PC-9 (cell line): ENCODE measurements at regions of chr4 and their contacts with region 1.

Region 1: GRCh38 chr4:180148737-180149136 is 2094.5 kb upstream of the TENM3 start:
- DNase-seq: no peak
- H3K4me3 ChIP-seq: no peak overlapping the region
- H3K27ac ChIP-seq: no peak overlapping the region
- H3K4me1 ChIP-seq: no peaks in the 10 kb centered on the region
- H3K27me3 ChIP-seq: no peaks in the 10 kb centered on the region
- CTCF ChIP-seq: no peak

Region 2: DNA sequence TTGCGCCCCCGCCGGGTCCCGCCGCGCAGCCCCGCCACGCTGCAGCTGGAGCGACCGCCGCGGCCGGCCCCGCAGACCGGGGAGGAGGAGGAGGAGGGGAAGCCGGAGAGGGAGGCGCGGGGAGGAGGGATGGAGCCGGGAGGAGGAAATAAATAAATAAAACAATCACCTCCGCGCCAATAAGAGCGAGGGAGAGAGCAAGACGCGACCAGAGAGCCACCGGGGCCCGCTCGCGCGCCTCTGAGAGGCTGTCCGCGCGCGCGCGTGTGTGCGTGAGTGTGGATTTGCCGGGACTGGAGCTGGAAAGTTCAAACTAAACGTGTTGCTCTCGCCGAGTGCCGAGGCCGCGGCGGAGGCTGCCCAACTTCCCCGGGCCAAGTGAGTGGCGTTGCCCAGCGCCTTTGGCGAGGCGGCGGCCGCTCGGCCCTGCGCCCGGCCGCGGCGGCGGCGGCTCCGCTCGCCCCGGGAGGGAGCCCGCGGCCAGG is 90.0 kb before region 1 on chr4:
- CTCF ChIA-PET with region 1: no interaction called
- POLR2A ChIA-PET with region 1: no interaction called
- intact Hi-C with region 1: loop called (anchors 5 kb)
- DNase-seq: peak in 1 of 2 experiments; percentile 30
- H3K4me3 ChIP-seq: peak overlapping the region; percentile 52; the same call in 1 of the 2 replicates
- H3K27ac ChIP-seq: no peak overlapping the region
- H3K4me1 ChIP-seq: 0 out of 2 replicates have a peak, but pooled peaks cover 5% of the 10 kb centered on the region
- H3K27me3 ChIP-seq: peaks cover 41% of the 10 kb centered on the region
- CTCF ChIP-seq: no peak

Region 3: DNA sequence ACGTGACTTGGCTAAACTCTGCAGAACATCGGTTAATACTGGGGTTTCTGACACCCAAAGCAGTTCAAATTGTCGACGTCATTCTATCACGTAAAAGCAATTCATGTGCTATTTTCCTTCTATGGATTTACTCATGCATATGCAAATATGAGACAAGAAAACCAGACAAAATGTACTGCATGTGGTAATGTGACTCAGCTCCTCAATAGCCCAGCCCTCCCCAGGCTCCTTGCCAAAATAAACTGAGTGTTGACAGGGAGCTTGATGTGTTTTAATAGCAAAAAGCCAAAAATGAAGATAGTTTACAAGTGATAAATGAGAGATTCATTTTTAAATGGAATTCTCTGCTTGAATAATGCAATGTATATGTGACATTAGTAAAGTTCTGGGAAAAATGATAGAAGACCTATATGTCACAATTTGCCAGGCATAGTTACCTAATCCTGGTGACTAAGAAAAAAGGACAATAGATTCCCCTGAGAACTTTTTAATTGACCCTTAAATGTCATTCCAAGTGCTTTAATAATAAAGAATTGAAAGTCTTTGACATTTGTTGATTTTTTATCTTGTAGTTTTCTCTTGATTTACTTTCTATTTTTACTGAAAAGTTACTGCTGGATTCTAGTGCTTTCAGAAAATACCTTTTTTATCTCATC is 393.8 kb after region 1 on chr4:
- CTCF ChIA-PET with region 1: no interaction called
- POLR2A ChIA-PET with region 1: no interaction called
- intact Hi-C with region 1: no loop called
- DNase-seq: peak in 1 of 2 experiments; percentile 32
- H3K4me3 ChIP-seq: no peak overlapping the region
- H3K27ac ChIP-seq: no peak overlapping the region
- H3K4me1 ChIP-seq: no peaks in the 10 kb centered on the region
- H3K27me3 ChIP-seq: no peaks in the 10 kb centered on the region
- CTCF ChIP-seq: no peak